ENCODE measurements at regions of chr7 and their contacts with region 1.

Region 1: DNA sequence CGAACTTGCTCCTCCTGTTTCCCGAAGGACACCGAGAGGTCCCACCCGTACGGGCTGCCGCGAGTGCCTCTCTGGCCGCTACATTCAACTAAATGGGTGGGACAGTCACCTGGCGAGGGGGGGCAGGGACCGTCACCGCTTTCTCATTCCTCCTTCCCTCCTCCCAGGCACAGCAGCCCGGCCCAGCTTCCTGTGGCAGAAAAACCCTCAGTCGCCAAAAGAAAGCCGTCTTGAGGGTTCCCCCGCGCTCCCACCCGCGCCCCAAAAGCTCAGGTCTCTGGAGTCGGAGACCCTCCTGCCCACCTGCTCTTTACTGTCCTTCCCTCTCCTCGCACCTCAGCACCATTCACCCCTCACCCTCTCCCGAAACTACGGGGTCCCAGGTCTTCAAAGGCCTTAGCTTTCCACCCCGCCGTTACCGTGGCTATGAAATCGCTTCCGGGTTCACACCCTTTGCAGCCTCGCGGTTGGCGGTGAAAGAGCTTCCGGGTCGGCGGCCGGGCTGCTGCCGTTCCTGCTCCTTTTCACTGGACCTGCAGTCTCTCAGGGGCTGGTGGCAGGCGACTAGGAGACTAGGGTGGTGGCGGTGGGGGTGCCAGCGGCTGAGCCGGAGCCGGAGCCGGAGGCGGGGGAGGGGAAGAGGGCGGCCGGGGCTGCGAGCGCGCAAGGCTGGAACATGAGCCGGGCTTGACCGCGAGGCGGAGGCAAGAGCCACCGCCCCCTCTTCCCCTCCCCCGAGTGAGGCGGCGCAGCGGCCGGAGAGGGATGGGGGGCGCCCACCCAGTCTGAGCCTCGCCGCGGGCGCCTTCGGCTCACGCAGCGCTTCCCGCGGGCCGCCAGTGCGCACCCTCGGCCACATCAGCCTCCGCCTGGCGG is at the starts of genes ANKIB1 and KRIT1:
- DNase-seq: peak; percentile 82 to 93
- ATAC-seq: peak; percentile 75 to 85 (median 81)
- H3K4me3 ChIP-seq: peak within 1 kb of the TSS; percentile 74
- H3K4me3 Mint-ChIP-seq: peak within 1 kb of the TSS; percentile 100
- H3K27ac ChIP-seq: peak within 1 kb of the TSS; percentile 92
- H3K27ac Mint-ChIP-seq: peak within 1 kb of the TSS; percentile 99
- H3K4me1 ChIP-seq: peaks cover 11% of the 10 kb centered on the region
- H3K4me1 Mint-ChIP-seq: peaks cover 39 to 45% of the 10 kb centered on the region in 2 donors
- H3K27me3 ChIP-seq: no peaks in the 10 kb centered on the region
- H3K27me3 Mint-ChIP-seq: no peaks in the 10 kb centered on the region
- CTCF ChIP-seq: no peak
- total RNA-seq, gene ANKIB1: 70.6 to 90.2 (median 86.6) TPM
- total RNA-seq, gene KRIT1: 55.4 to 76.7 (median 62.6) TPM

Region 2: DNA sequence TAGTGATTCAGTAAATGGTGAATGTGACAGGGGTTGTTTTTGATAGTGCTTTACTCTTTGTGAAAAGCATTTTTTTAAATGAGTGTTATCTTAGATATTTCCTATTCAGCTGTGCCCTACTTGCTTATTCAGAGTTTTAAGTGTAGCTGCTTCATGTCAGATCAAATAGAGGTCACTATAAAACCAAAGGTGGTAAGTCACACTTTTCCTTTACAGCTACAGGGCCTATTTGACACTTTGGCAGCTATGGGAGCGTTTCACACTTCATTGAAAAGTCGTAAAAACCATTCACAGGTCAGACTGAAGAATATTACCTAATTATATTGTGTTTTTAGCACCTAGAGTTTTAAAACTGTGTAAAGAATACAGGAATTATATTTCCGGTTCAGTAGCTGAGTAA is 67.3 kb after region 1 on chr7:
- intact Hi-C with region 1: loop called (anchors 1 kb)
- DNase-seq: peak in 1 of 2 donors; percentile 27
- ATAC-seq: peak; percentile 93 to 96 (median 95)
- H3K4me3 ChIP-seq: no peak overlapping the region
- H3K4me3 Mint-ChIP-seq: peak overlapping the region; percentile 35
- H3K27ac ChIP-seq: peak overlapping the region; percentile 64
- H3K27ac Mint-ChIP-seq: peak overlapping the region; percentile 84 to 93
- H3K4me1 ChIP-seq: no peaks in the 10 kb centered on the region
- H3K4me1 Mint-ChIP-seq: peaks cover 18 to 19% of the 10 kb centered on the region in 2 donors
- H3K27me3 ChIP-seq: no peaks in the 10 kb centered on the region
- H3K27me3 Mint-ChIP-seq: no peaks in the 10 kb centered on the region
- CTCF ChIP-seq: no peak

Measured in natural killer cell (primary cell).